Dorsolateral prefrontal cortex (tissue), 120 donors: ENCODE measurements at regions of chr3 and their contacts with region 1.

Region 1: GRCh38 chr3:130276203-130276803 is 69.2 kb upstream of the COL6A5 start:
- DNase-seq: peak in 1 of 10 donors; percentile 22
- H3K4me3 ChIP-seq: no peak overlapping the region
- H3K27ac ChIP-seq: no peak overlapping the region
- H3K27me3 ChIP-seq: peaks cover 0 to 9% (median 0%) of the 10 kb centered on the region in 45 donors
- CTCF ChIP-seq: peak; percentile 35 to 87 (median 78)

Region 2: DNA sequence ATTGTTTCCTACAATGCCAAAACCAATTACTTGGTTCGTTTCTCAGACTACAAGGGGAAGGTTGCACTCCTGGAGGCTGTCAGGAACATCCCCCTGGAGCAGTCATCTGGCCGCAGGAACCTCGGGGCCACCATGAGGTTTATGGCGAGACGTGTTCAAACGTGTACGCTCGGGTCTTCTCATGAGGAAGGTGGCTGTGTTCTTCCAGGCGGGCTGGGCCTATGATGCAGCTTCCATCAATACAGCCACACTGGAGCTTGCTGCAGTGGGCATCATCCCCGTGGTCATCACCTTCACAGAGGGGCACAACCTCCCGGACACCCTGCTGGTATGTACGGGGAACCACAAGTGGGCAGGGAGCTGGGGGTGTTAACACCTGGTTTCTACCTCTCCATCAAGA is 25.3 kb before region 1 on chr3:
- intact Hi-C with region 1: no loop called
- DNase-seq: no peak
- H3K4me3 ChIP-seq: no peak overlapping the region
- H3K27ac ChIP-seq: no peak overlapping the region
- H3K27me3 ChIP-seq: peaks cover 0 to 8% (median 0%) of the 10 kb centered on the region in 45 donors
- CTCF ChIP-seq: no peak

Region 3: GRCh38 chr3:130539005-130539404 is 262.7 kb after region 1 on chr3:
- intact Hi-C with region 1: loop called in 1 of 2 experiments (anchors 10 kb)
- DNase-seq: peak in 4 of 10 donors; percentile 32 to 44 (median 40)
- H3K4me3 ChIP-seq: no peak overlapping the region
- H3K27ac ChIP-seq: no peak overlapping the region
- H3K27me3 ChIP-seq: peaks cover 0 to 4% (median 0%) of the 10 kb centered on the region in 45 donors
- CTCF ChIP-seq: peak in 55 of 56 donors; percentile 27 to 69 (median 54)